ENCODE measurements at regions of chr1 and their contacts with region 1.

Region 1: GRCh38 chr1:86507935-86508582 is 38.8 kb upstream of the CLCA4 start:
- DNase-seq: peak; percentile 40
- H3K4me3 Mint-ChIP-seq: no peak overlapping the region
- H3K27ac Mint-ChIP-seq: no peak overlapping the region
- H3K4me1 Mint-ChIP-seq: no peaks in the 10 kb centered on the region
- H3K27me3 Mint-ChIP-seq: no peaks in the 10 kb centered on the region
- CTCF ChIP-seq: peak; percentile 45

Region 2: GRCh38 chr1:86522240-86522639 is 14.2 kb after region 1 on chr1:
- CTCF ChIA-PET with region 1: interaction called, 13 read pairs
- POLR2A ChIA-PET with region 1: no interaction called
- intact Hi-C with region 1: no loop called
- DNase-seq: no peak
- H3K4me3 Mint-ChIP-seq: no peak overlapping the region
- H3K27ac Mint-ChIP-seq: no peak overlapping the region
- H3K4me1 Mint-ChIP-seq: peaks cover 4% of the 10 kb centered on the region
- H3K27me3 Mint-ChIP-seq: no peaks in the 10 kb centered on the region
- CTCF ChIP-seq: no peak

Region 3: GRCh38 chr1:86741947-86742572 is 234.0 kb after region 1 on chr1:
- CTCF ChIA-PET with region 1: no interaction called
- POLR2A ChIA-PET with region 1: no interaction called
- intact Hi-C with region 1: loop called (anchors 1 kb)
- DNase-seq: peak; percentile 62
- H3K4me3 Mint-ChIP-seq: no peak overlapping the region
- H3K27ac Mint-ChIP-seq: no peak overlapping the region
- H3K4me1 Mint-ChIP-seq: no peaks in the 10 kb centered on the region
- H3K27me3 Mint-ChIP-seq: no peaks in the 10 kb centered on the region
- CTCF ChIP-seq: peak; percentile 59